ENCODE measurements at regions of chr1 and their contacts with region 1.

Region 1: DNA sequence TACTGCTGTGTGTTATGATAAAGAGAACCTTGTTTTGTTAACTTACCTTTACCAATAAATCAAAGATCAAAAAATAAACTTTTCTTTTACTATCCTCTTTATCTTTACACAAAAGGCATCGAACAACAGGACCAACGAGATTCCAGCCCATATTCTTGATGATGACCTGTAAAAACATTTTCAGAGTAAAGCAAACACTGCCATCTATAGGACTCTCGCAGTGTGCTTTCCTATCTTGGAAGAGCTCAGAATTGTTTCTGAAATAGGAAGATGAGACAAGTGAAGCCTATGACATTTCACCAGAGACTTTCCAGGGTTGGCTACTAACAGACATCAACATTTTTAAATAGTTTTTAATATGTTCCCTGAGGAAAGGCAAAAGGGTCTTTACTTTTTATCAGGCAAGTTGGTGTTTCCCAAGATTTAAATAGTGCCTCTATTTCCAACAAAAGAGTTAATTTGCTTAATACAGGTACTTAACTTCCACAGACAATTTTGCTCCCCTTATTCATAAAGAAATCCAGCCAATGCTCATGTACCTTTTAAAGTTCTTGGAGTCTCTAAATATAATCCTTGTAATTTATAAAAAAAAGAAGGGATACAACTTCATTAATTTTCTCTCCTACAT is 7.3 kb downstream of the GLMN start:
- DNase-seq: peak; percentile 49
- H3K4me3 ChIP-seq: no peak overlapping the region
- H3K27ac ChIP-seq: no peak overlapping the region
- H3K4me1 ChIP-seq: no peaks in the 10 kb centered on the region
- H3K27me3 ChIP-seq: no peaks in the 10 kb centered on the region
- CTCF ChIP-seq: peak; percentile 88
- EP300 ChIP-seq: no peak
- RAD21 ChIP-seq: peak; percentile 86

Region 2: GRCh38 chr1:92004129-92004528 is 287.4 kb before region 1 on chr1:
- CTCF ChIA-PET with region 1: interaction called, 127 read pairs
- POLR2A ChIA-PET with region 1: no interaction called
- DNase-seq: no peak
- H3K4me3 ChIP-seq: no peak overlapping the region
- H3K27ac ChIP-seq: no peak overlapping the region
- H3K4me1 ChIP-seq: no peaks in the 10 kb centered on the region
- H3K27me3 ChIP-seq: 0 out of 2 replicates have a peak, but pooled peaks cover 4% of the 10 kb centered on the region
- CTCF ChIP-seq: no peak
- EP300 ChIP-seq: no peak
- RAD21 ChIP-seq: no peak

Measured in SK-N-SH (cell line).